ENCODE measurements at regions of chr1 and their contacts with region 1.

Region 1: GRCh38 chr1:62082456-62083363 is 111.9 kb upstream of the L1TD1 start:
- DNase-seq: peak; percentile 49
- CTCF ChIP-seq: peak; percentile 92

Region 2: GRCh38 chr1:62064829-62065407 is 17.8 kb before region 1 on chr1:
- CTCF ChIA-PET with region 1: interaction called, 14 read pairs
- POLR2A ChIA-PET with region 1: no interaction called
- DNase-seq: no peak
- CTCF ChIP-seq: no peak

Region 3: GRCh38 chr1:62071695-62072094 is 11.0 kb before region 1 on chr1:
- CTCF ChIA-PET with region 1: interaction called, 14 read pairs
- POLR2A ChIA-PET with region 1: no interaction called
- DNase-seq: no peak
- CTCF ChIP-seq: no peak

Region 4: GRCh38 chr1:62093261-62093660 is 10.6 kb after region 1 on chr1:
- CTCF ChIA-PET with region 1: interaction called, 55 read pairs
- POLR2A ChIA-PET with region 1: no interaction called
- DNase-seq: no peak
- CTCF ChIP-seq: no peak

Region 5: DNA sequence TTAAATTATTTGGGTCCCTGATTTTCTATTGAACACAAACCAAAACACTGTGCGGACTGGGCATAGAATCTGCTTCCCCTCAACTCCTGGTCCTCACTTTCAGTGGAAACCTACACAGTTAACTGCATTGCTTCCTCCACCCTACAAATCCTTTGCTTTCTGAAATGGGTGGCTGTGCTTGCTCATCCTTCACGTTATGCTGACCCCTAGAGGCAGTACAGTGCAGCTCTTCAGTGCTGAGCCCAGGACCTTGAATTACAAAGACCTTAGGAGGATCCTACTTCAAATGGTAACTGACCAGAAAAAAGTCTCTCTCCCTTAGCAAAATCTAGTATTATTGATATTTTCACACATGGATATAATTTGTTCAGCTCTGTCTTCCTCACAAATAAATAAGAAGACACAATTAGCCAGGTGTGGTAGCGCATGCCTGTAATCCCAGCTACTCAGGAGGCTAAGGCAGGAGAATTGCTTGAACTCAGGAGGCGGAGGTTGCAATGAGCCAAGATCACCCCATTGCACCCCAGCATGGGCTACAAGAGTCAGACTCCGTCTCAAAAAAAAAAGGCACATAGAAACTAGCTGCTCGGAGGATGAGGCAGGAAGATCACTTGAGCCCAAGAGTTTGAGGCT is 48.5 kb after region 1 on chr1:
- CTCF ChIA-PET with region 1: interaction called, 80 read pairs
- POLR2A ChIA-PET with region 1: no interaction called
- DNase-seq: peak; percentile 75
- CTCF ChIP-seq: peak; percentile 97

Region 6: GRCh38 chr1:62144238-62144831 is 61.6 kb after region 1 on chr1:
- CTCF ChIA-PET with region 1: interaction called, 15 read pairs
- POLR2A ChIA-PET with region 1: no interaction called
- DNase-seq: peak; percentile 45
- CTCF ChIP-seq: peak; percentile 78

Region 7: GRCh38 chr1:62364726-62365125 is 282.0 kb after region 1 on chr1:
- CTCF ChIA-PET with region 1: no interaction called
- POLR2A ChIA-PET with region 1: no interaction called
- DNase-seq: no peak
- CTCF ChIP-seq: no peak

Region 8: GRCh38 chr1:62450301-62450700 is 367.6 kb after region 1 on chr1:
- CTCF ChIA-PET with region 1: no interaction called
- POLR2A ChIA-PET with region 1: no interaction called
- DNase-seq: no peak
- CTCF ChIP-seq: no peak